CD14-positive monocyte (primary cell): ENCODE measurements at regions of chr9 and their contacts with region 1.

Region 1: GRCh38 chr9:89323390-89323789 is 5.1 kb downstream of the SECISBP2 start:
- DNase-seq: no peak
- H3K4me3 ChIP-seq: no peak overlapping the region
- H3K4me3 Mint-ChIP-seq: no peak overlapping the region
- H3K27ac ChIP-seq: peak overlapping the region in 1 of 2 donors; percentile 30
- H3K27ac Mint-ChIP-seq: peak overlapping the region in 3 of 7 donors; percentile 41 to 73 (median 54)
- H3K4me1 ChIP-seq: peaks cover 14 to 18% of the 10 kb centered on the region in 2 donors
- H3K4me1 Mint-ChIP-seq: peaks cover 31% of the 10 kb centered on the region
- H3K27me3 ChIP-seq: no peaks in the 10 kb centered on the region
- H3K27me3 Mint-ChIP-seq: no peaks in the 10 kb centered on the region
- CTCF ChIP-seq: no peak

Region 2: GRCh38 chr9:89536145-89536574 is 212.8 kb after region 1 on chr9:
- intact Hi-C with region 1: loop called in 1 of 2 experiments (anchors 10 kb)
- DNase-seq: peak; percentile 68 to 83 (median 74)
- H3K4me3 ChIP-seq: peak overlapping the region in 1 of 3 experiments; percentile 52
- H3K4me3 Mint-ChIP-seq: peak overlapping the region in 1 of 2 donors; percentile 61
- H3K27ac ChIP-seq: peak overlapping the region; percentile 83 to 91
- H3K27ac Mint-ChIP-seq: peak overlapping the region; percentile 83 to 95 (median 92)
- H3K4me1 ChIP-seq: peaks cover 47 to 62% of the 10 kb centered on the region in 2 donors
- H3K4me1 Mint-ChIP-seq: peaks cover 66% of the 10 kb centered on the region
- H3K27me3 ChIP-seq: no peaks in the 10 kb centered on the region
- H3K27me3 Mint-ChIP-seq: peaks cover 0 to 4% (median 0%) of the 10 kb centered on the region in 3 donors
- CTCF ChIP-seq: no peak